ENCODE measurements at regions of chr13 and their contacts with region 1.

Region 1: DNA sequence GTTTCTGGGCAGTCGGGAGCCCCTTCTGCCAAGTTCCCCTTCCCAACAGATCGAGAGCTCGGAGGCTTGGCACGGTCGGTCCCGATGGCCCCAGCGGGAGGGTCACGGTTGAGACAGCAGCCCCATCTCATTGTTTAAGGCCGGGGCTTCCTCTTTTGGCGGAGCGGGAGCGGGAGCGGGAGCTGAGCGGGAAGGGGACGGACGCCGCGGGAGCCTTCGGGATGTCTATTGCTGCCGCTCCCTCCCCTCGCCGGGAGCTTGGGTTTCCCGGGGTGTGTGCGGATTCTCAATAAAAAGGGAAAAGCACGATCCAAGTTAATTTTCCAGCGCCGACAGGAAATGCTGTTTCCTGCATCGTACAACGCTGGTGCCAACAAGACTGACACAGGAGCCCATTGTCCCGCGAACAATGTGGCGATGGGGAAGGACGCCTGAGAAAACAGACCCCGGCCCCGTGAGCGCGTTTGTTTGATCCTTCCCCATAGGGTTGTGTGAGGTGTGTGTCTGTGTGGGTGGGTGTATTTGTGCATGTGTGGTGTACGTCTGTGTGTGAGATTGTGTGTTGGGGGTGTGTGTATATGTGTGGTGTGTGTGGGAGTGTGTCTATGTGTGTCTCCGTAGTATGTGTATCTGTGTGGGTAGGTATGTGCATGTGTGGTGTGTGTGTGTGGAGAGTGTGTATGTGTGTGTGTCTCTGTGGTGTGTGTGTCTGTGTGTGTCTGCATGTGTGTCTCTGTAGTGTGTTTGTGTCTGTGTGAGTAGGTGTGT is 36.3 kb upstream of the FLT1 start:
- DNase-seq: peak; percentile 29 to 68 (median 45)
- H3K4me3 ChIP-seq: peak overlapping the region in 1 of 3 experiments; percentile 68
- H3K4me3 Mint-ChIP-seq: no peak overlapping the region
- H3K27ac ChIP-seq: no peak overlapping the region
- H3K27ac Mint-ChIP-seq: no peak overlapping the region
- H3K4me1 ChIP-seq: peaks cover 52 to 60% of the 10 kb centered on the region in 2 donors
- H3K4me1 Mint-ChIP-seq: peaks cover 27% of the 10 kb centered on the region
- H3K27me3 ChIP-seq: peaks cover 33 to 51% of the 10 kb centered on the region in 2 donors
- H3K27me3 Mint-ChIP-seq: peaks cover 23 to 38% (median 27%) of the 10 kb centered on the region in 3 donors
- CTCF ChIP-seq: no peak

Region 2: GRCh38 chr13:28394422-28394821 is 136.8 kb before region 1 on chr13:
- intact Hi-C with region 1: loop called in 1 of 2 experiments (anchors 10 kb)
- DNase-seq: peak; percentile 83 to 96 (median 95)
- H3K4me3 ChIP-seq: no peak overlapping the region
- H3K4me3 Mint-ChIP-seq: peak overlapping the region in 1 of 2 donors; percentile 26
- H3K27ac ChIP-seq: peak overlapping the region in 1 of 2 donors; percentile 29
- H3K27ac Mint-ChIP-seq: peak overlapping the region in 5 of 7 donors; percentile 5 to 76 (median 41)
- H3K4me1 ChIP-seq: peaks cover 10 to 11% of the 10 kb centered on the region in 2 donors
- H3K4me1 Mint-ChIP-seq: peaks cover 18% of the 10 kb centered on the region
- H3K27me3 ChIP-seq: peaks cover 15 to 19% of the 10 kb centered on the region in 2 donors
- H3K27me3 Mint-ChIP-seq: peaks cover 26 to 43% (median 27%) of the 10 kb centered on the region in 3 donors
- CTCF ChIP-seq: no peak

Region 3: DNA sequence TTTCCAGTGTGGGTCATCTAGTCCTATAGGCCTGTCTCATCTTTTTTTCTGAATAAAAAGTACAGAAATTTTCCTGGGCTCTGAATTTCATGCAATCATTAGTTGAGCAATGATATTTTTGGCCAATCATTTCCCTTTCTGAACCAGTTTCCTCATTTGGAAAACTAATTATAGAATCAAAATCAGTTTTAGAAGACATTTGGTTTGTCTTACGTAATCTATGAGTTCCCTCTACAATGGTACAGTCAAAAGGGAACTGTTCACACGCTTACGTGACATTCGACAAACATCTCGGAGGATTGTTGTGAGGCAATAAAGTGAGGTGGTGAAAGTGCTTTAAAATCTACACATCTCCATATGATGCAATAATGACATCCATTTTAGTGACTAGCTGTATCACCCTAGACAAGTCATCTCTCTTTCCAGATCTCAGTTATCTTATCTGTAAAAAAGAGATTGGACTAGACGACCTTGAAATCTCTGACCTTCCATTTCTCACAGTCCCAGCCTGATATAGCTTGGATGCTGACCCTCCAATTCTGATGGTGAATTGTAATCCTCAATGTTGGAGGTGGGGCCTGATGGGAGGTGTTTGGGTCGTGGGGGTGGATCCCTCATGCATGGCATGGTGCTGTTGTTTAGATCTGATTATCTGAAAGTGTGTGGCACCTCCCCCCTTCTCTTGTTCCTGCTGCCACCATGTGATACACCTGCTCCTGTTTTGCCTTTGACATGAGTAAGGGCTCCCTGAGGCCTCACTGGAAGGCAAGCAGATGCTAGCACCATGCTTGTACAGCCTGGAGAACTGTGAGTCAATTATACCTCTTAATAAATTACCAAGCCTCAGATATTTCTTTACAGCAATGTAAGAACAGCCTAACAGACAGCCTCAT is 63.0 kb before region 1 on chr13:
- intact Hi-C with region 1: loop called (anchors 5 to 10 kb)
- DNase-seq: peak; percentile 97 to 100 (median 99)
- H3K4me3 ChIP-seq: no peak overlapping the region
- H3K4me3 Mint-ChIP-seq: no peak overlapping the region
- H3K27ac ChIP-seq: peak overlapping the region; percentile 87 to 91
- H3K27ac Mint-ChIP-seq: peak overlapping the region; percentile 92 to 98 (median 97)
- H3K4me1 ChIP-seq: peaks cover 46 to 56% of the 10 kb centered on the region in 2 donors
- H3K4me1 Mint-ChIP-seq: peaks cover 44% of the 10 kb centered on the region
- H3K27me3 ChIP-seq: no peaks in the 10 kb centered on the region
- H3K27me3 Mint-ChIP-seq: peaks cover 0 to 13% (median 6%) of the 10 kb centered on the region in 3 donors
- CTCF ChIP-seq: no peak

Region 4: GRCh38 chr13:28475916-28476725 is 55.1 kb before region 1 on chr13:
- intact Hi-C with region 1: loop called in 1 of 2 experiments (anchors 10 kb)
- DNase-seq: peak; percentile 74 to 91 (median 86)
- H3K4me3 ChIP-seq: no peak overlapping the region
- H3K4me3 Mint-ChIP-seq: no peak overlapping the region
- H3K27ac ChIP-seq: peak overlapping the region in 1 of 2 donors; percentile 22
- H3K27ac Mint-ChIP-seq: peak overlapping the region; percentile 71 to 91 (median 80)
- H3K4me1 ChIP-seq: peaks cover 24 to 42% of the 10 kb centered on the region in 2 donors
- H3K4me1 Mint-ChIP-seq: peaks cover 37% of the 10 kb centered on the region
- H3K27me3 ChIP-seq: peaks cover 2 to 10% of the 10 kb centered on the region in 2 donors
- H3K27me3 Mint-ChIP-seq: peaks cover 2 to 10% (median 4%) of the 10 kb centered on the region in 3 donors
- CTCF ChIP-seq: no peak

Region 5: DNA sequence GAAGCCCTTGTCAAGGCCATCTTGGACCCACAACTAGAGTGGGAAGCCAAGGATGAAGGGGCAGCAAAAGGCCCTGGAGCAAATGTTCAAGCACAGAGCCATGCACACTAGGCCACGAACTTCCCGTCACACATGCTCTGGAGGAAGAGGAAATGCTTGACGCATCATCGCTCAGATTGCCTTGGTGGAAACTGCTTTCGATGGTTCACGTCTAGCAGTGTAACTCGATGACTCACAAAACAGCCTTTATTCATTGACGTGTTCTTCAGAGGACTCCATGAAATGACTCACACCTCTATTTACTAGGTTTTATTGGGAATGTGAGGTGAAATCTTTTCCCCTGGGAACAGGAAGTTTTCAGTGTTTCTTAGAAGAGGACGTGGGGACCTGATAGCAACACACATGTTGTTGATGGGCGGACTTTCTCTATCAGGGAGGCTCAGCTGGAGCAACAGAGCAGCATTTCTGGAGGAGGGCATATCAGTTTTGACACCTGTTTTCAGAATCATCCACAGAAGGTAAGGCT is 43.4 kb after region 1 on chr13:
- intact Hi-C with region 1: loop called (anchors 5 kb)
- DNase-seq: peak; percentile 95 to 100 (median 100)
- H3K4me3 ChIP-seq: no peak overlapping the region
- H3K4me3 Mint-ChIP-seq: peak overlapping the region in 1 of 2 donors; percentile 54
- H3K27ac ChIP-seq: peak overlapping the region; percentile 79 to 93
- H3K27ac Mint-ChIP-seq: peak overlapping the region; percentile 98 to 100 (median 100)
- H3K4me1 ChIP-seq: peaks cover 41 to 49% of the 10 kb centered on the region in 2 donors
- H3K4me1 Mint-ChIP-seq: peaks cover 48% of the 10 kb centered on the region
- H3K27me3 ChIP-seq: peaks cover 0 to 3% of the 10 kb centered on the region in 2 donors
- H3K27me3 Mint-ChIP-seq: peaks cover 6 to 21% (median 12%) of the 10 kb centered on the region in 3 donors
- CTCF ChIP-seq: no peak

Region 6: GRCh38 chr13:28636674-28637317 is 105.5 kb after region 1 on chr13:
- intact Hi-C with region 1: loop called in 1 of 2 experiments (anchors 5 kb)
- DNase-seq: peak; percentile 65 to 95 (median 82)
- H3K4me3 ChIP-seq: no peak overlapping the region
- H3K4me3 Mint-ChIP-seq: peak overlapping the region in 1 of 2 donors; percentile 40
- H3K27ac ChIP-seq: no peak overlapping the region
- H3K27ac Mint-ChIP-seq: peak overlapping the region in 2 of 7 donors; percentile 18 to 59
- H3K4me1 ChIP-seq: peaks cover 4 to 8% of the 10 kb centered on the region in 2 donors
- H3K4me1 Mint-ChIP-seq: peaks cover 5% of the 10 kb centered on the region
- H3K27me3 ChIP-seq: peaks cover 6 to 8% of the 10 kb centered on the region in 2 donors
- H3K27me3 Mint-ChIP-seq: peaks cover 13 to 18% (median 14%) of the 10 kb centered on the region in 3 donors
- CTCF ChIP-seq: peak; percentile 90